Lower lobe of right lung (tissue), 2 donors: ENCODE measurements at regions of chr7 and their contacts with region 1.

Region 1: DNA sequence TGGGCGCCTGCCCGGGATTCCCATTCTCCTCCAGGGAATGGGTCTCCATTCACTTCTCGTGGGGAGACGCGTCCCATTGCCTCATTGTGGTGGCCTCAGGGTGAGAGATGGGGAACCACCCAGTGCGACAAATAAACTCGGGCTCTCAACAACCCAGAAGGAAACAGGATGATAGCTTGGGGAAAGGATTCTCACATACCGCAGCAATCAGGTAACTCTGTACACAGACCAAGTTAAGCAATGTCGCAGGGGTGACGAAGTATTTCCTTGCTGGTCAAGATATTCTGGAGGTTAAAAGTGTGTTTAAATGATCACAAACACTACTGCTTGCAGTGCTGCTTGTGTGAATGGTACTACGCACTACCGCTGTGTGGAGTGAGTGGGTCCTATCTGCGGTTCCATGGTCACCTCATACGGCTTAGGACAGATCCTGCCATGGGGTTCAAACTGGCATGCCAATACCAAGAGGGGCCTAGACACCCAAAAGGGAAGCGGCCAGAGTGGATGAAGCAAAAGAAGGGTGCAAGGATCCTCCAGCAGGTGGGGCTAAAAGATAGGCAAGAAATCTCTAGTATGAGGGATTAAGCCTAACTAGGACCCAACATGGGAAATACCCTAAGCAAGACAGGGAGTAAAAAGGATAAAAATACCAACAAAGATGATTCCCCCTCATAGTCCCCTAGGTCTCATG is 143.8 kb upstream of the TMEM106B start:
- DNase-seq: no peak
- ATAC-seq: peak; percentile 79 to 90
- H3K4me3 ChIP-seq: no peak overlapping the region
- H3K27ac ChIP-seq: no peak overlapping the region
- H3K4me1 ChIP-seq: no peaks in the 10 kb centered on the region
- H3K27me3 ChIP-seq: no peaks in the 10 kb centered on the region
- CTCF ChIP-seq: peak; percentile 65

Region 2: GRCh38 chr7:12139409-12139808 is 72.1 kb after region 1 on chr7:
- intact Hi-C with region 1: no loop called
- DNase-seq: no peak
- ATAC-seq: no peak
- H3K4me3 ChIP-seq: no peak overlapping the region
- H3K27ac ChIP-seq: no peak overlapping the region
- H3K4me1 ChIP-seq: no peaks in the 10 kb centered on the region
- H3K27me3 ChIP-seq: no peaks in the 10 kb centered on the region
- CTCF ChIP-seq: no peak

Region 3: GRCh38 chr7:12315049-12315448 is 247.8 kb after region 1 on chr7:
- intact Hi-C with region 1: loop called (anchors 5 kb)
- DNase-seq: no peak
- ATAC-seq: peak; percentile 46 to 67
- H3K4me3 ChIP-seq: no peak overlapping the region
- H3K27ac ChIP-seq: no peak overlapping the region
- H3K4me1 ChIP-seq: no peaks in the 10 kb centered on the region
- H3K27me3 ChIP-seq: no peaks in the 10 kb centered on the region
- CTCF ChIP-seq: no peak

Region 4: GRCh38 chr7:12444785-12445184 is 377.5 kb after region 1 on chr7:
- intact Hi-C with region 1: no loop called
- DNase-seq: no peak
- ATAC-seq: no peak
- H3K4me3 ChIP-seq: no peak overlapping the region
- H3K27ac ChIP-seq: no peak overlapping the region
- H3K4me1 ChIP-seq: no peaks in the 10 kb centered on the region
- H3K27me3 ChIP-seq: no peaks in the 10 kb centered on the region
- CTCF ChIP-seq: no peak

Region 5: DNA sequence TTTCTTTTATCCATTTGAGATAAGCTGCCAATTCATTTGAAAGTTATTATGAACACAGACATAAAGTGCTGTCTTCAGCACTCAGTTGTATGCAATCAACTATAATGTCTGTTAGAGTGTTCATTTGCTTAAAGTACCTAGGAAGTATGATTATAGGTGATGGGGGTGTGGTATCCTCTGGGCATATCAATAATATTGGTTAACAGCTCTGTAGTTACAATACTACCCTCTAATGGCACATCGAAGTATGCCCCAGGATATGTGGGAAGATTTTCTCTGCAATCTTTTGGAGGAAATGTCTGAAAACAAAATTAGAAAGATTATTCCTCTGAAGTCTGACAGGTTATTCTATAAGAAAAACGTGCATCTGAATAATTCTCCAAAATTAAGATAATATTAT is 1049.8 kb after region 1 on chr7:
- intact Hi-C with region 1: no loop called
- DNase-seq: no peak
- ATAC-seq: no peak
- H3K4me3 ChIP-seq: no peak overlapping the region
- H3K27ac ChIP-seq: no peak overlapping the region
- H3K4me1 ChIP-seq: no peaks in the 10 kb centered on the region
- H3K27me3 ChIP-seq: no peaks in the 10 kb centered on the region
- CTCF ChIP-seq: no peak